ENCODE measurements at regions of chr22 and their contacts with region 1.

Region 1: DNA sequence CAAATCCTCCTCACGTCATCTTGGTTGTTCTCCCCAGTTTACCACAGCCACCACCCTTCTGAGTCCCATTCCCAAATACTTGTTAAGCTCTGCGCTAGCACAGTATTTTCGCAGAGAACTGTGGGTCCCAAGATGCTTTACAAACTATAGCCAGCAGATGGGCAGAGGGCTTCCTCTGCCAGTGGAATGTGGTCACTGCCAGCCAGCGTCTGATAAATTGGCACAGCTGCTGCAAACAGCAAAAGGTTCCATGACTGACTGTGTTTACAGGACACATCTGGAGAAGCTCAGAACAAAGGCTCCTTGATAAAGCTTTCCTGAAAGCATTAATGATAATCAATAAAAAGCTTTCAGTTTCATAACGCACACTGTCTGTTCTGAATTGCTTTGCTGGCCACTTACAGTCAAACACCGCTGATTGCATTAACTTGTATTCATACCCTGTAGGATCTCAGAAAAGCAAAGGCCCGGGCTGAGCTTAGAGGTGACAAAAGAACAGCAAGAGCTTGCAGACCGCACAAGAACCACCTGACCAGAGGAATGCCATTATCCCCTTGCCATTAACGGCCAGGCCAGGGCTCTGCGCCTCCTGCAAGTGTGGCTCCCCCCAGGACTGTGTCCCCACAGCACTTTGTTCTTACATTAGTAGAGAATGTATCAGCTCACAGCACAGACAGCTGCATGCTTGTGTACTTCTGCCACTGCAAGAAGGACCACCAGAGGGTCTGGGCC is 120.6 kb downstream of the MICAL3 start:
- DNase-seq: no peak
- H3K4me3 ChIP-seq: no peak overlapping the region
- H3K27ac ChIP-seq: no peak overlapping the region
- H3K4me1 ChIP-seq: no peaks in the 10 kb centered on the region
- H3K27me3 ChIP-seq: no peaks in the 10 kb centered on the region
- CTCF ChIP-seq: no peak
- POLR2A ChIP-seq: no peak

Region 2: DNA sequence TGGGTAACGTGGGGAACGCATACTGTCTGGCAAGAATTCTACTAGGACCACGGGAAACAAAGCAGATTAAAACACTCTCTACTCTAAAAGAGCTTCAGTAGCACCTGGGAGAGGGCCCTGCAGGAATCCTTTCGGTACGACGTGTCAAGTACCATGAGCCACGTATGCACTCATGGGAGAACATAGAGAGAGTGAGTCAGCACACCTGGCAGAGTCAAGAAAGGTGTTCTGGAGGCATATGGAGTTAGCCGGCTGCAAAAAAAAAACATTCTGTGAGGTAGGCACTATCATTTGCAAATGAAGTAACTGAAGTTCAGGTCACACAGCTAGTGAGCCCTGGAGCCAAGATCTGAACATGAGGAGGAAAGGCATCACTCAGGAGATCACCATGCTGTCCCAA is 58.4 kb before region 1 on chr22:
- intact Hi-C with region 1: no loop called
- DNase-seq: no peak
- H3K4me3 ChIP-seq: no peak overlapping the region
- H3K27ac ChIP-seq: no peak overlapping the region
- H3K4me1 ChIP-seq: peaks cover 0 to 34% of the 10 kb centered on the region in 2 donors
- H3K27me3 ChIP-seq: no peaks in the 10 kb centered on the region
- CTCF ChIP-seq: no peak
- POLR2A ChIP-seq: no peak

Region 3: DNA sequence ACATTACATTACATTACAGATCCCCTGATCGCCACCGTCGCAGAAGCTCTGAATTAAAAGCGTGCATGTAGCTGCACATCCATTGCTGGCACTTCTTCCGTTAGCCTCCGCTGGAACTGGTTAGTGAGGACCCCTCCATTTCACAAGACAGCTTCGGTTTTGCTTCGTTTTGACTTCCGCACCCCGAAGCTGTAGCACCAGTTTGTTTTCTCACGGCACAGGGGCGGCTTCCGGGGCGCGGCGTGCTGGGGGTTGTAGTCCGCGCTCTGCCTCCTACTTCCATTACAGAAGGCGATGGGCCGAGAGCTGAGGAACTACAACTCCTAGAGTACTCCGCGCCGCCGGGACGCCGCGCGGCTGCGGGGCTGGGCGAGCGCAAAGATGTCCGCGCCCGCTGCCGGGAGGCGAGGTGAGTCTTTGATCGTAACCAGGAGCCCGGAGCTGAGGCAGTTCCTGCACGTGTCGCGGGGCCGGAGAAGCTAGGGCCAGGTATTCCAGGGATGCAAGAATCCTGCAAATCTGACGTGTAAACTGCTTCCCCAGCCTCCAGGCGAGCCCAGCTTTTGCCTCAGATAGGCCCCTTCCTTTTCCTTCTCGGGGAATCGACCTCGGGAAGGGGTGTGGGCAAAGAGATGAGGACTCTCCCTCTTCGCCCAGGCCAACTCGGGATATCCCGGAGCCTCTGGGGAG is 174.1 kb after region 1 on chr22 and contains the start of gene PEX26:
- intact Hi-C with region 1: loop called in 1 of 2 experiments (anchors 10 kb)
- DNase-seq: peak; percentile 92 to 98 (median 96)
- H3K4me3 ChIP-seq: peak within 1 kb of the TSS; percentile 25 to 95 (median 82)
- H3K27ac ChIP-seq: peak within 1 kb of the TSS; percentile 52 to 92 (median 87)
- H3K4me1 ChIP-seq: peaks cover 22 to 33% of the 10 kb centered on the region in 2 donors
- H3K27me3 ChIP-seq: no peaks in the 10 kb centered on the region
- CTCF ChIP-seq: peak in 1 of 6 experiments; percentile 2
- POLR2A ChIP-seq: peak; percentile 8 to 90
- total RNA-seq, gene PEX26: 15.7 to 57.8 (median 40.9) TPM

Measured in adrenal gland (tissue), 19 donors.